ENCODE measurements at regions of chr15 and their contacts with region 1.

Region 1: GRCh38 chr15:85831415-85832113 is 36.8 kb upstream of the KLHL25 start:
- DNase-seq: peak; percentile 65 to 76
- H3K4me3 ChIP-seq: no peak overlapping the region
- H3K27ac ChIP-seq: no peak overlapping the region
- H3K4me1 ChIP-seq: no peaks in the 10 kb centered on the region
- H3K27me3 ChIP-seq: no peaks in the 10 kb centered on the region
- CTCF ChIP-seq: peak; percentile 61 to 67

Region 2: GRCh38 chr15:85485956-85486567 is 345.5 kb before region 1 on chr15:
- intact Hi-C with region 1: loop called (anchors 10 kb)
- DNase-seq: peak in 1 of 2 donors; percentile 43
- H3K4me3 ChIP-seq: no peak overlapping the region
- H3K27ac ChIP-seq: no peak overlapping the region
- H3K4me1 ChIP-seq: no peaks in the 10 kb centered on the region
- H3K27me3 ChIP-seq: no peaks in the 10 kb centered on the region
- CTCF ChIP-seq: peak; percentile 65 to 77

Region 3: DNA sequence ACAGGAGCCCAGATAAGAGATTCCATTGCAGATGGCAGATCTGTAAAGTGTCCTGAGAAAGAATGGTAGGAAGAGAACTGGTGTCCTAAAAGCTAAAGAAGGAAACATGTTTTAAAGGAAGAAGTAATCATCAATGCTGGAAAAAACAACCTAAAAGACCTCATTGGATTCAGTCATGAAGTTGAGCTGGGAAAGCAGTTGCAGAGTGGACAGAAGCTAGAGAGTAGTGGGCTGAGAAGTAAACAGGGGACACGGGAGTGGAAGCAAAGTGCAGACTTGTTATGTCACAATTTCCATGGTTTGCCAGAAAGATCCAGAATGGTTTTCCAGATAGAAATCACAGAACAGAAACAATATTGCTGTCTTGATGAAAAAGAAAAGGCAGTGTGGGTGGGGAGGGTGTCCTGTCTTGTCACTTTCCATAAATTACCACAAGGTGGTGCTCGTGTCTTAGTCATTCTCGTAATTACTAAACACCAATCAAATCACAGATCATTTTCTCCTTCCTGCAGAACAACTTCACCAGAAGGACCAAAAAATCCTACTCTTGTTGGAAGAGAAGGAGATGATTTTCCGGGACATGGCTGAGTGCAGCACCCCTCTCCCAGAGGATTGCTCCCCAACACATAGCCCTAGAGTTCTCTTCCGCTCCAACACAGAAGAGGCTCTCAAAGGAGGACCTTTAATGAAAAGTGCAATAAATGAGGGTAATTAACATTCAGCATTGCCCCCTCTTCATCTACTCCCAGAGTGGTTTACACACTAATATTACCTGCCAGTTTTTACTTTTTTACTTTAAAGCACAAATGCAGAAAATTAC is 101.4 kb before region 1 on chr15:
- intact Hi-C with region 1: loop called (anchors 5 kb)
- DNase-seq: peak in 1 of 2 donors; percentile 45
- H3K4me3 ChIP-seq: no peak overlapping the region
- H3K27ac ChIP-seq: peak overlapping the region; percentile 50 to 84
- H3K4me1 ChIP-seq: peaks cover 0 to 28% (median 20%) of the 10 kb centered on the region in 4 donors
- H3K27me3 ChIP-seq: no peaks in the 10 kb centered on the region
- CTCF ChIP-seq: peak; percentile 76 to 78

Region 4: GRCh38 chr15:85871545-85871944 is 40.0 kb after region 1 on chr15:
- intact Hi-C with region 1: no loop called
- DNase-seq: no peak
- H3K4me3 ChIP-seq: no peak overlapping the region
- H3K27ac ChIP-seq: no peak overlapping the region
- H3K4me1 ChIP-seq: no peaks in the 10 kb centered on the region
- H3K27me3 ChIP-seq: peaks cover 0 to 27% of the 10 kb centered on the region in 2 donors
- CTCF ChIP-seq: no peak